ENCODE measurements at regions of chr9 and their contacts with region 1.

Region 1: GRCh38 chr9:23005156-23005555 is 558.5 kb downstream of the DMRTA1 start:
- DNase-seq: no peak
- ATAC-seq: no peak
- H3K4me3 ChIP-seq: no peak overlapping the region
- H3K27ac ChIP-seq: no peak overlapping the region
- H3K4me1 ChIP-seq: no peaks in the 10 kb centered on the region
- H3K27me3 ChIP-seq: no peaks in the 10 kb centered on the region
- CTCF ChIP-seq: no peak

Region 2: DNA sequence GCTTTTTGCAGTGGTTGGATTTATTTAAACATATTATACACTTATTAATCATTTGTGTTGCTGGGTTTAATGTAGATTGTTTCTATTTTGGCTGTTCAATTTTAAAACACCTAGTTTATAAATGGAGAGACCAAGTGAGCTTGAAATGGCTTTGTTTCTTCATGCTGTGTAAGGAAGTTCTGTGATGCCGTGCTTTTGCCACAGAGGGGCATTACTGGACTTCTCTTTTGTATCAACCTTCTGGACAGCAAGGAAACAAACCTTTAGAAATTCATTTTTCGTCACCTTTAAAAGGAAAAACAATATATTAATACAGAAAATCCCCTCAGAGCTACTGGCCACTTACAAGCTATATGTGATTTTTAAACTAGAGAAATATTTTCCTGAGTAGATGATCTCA is 476.7 kb before region 1 on chr9:
- intact Hi-C with region 1: no loop called
- DNase-seq: no peak
- ATAC-seq: no peak
- H3K4me3 ChIP-seq: no peak overlapping the region
- H3K27ac ChIP-seq: no peak overlapping the region
- H3K4me1 ChIP-seq: no peaks in the 10 kb centered on the region
- H3K27me3 ChIP-seq: no peaks in the 10 kb centered on the region
- CTCF ChIP-seq: peak in 4 of 9 donors; percentile 19 to 37 (median 26)

Region 3: DNA sequence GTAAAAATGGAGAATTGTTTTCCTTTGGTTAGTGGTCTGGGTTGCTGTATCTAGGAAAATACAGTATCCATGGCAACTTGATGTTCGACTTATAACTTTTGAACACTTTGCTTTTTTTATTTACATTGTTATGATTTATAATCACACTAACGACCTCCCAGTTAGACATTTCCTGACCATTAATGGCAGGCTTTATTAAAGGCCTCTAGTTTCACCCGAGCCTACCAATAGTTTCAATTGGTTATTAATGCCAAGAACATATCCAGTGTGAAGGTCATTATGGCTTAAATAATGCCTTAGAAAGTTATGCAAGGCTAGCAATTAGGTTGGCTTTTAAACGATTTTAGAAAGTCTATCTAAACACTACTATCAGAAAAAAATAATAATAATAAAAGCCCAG is 106.6 kb before region 1 on chr9:
- intact Hi-C with region 1: no loop called
- DNase-seq: no peak
- ATAC-seq: no peak
- H3K4me3 ChIP-seq: no peak overlapping the region
- H3K27ac ChIP-seq: no peak overlapping the region
- H3K4me1 ChIP-seq: no peaks in the 10 kb centered on the region
- H3K27me3 ChIP-seq: no peaks in the 10 kb centered on the region
- CTCF ChIP-seq: no peak

Region 4: GRCh38 chr9:22954550-22954949 is 50.6 kb before region 1 on chr9:
- intact Hi-C with region 1: no loop called
- DNase-seq: no peak
- ATAC-seq: no peak
- H3K4me3 ChIP-seq: no peak overlapping the region
- H3K27ac ChIP-seq: no peak overlapping the region
- H3K4me1 ChIP-seq: no peaks in the 10 kb centered on the region
- H3K27me3 ChIP-seq: no peaks in the 10 kb centered on the region
- CTCF ChIP-seq: no peak

Region 5: GRCh38 chr9:23073136-23073535 is 68.0 kb after region 1 on chr9:
- intact Hi-C with region 1: loop called in 1 of 10 experiments (anchors 10 kb)
- DNase-seq: no peak
- ATAC-seq: no peak
- H3K4me3 ChIP-seq: no peak overlapping the region
- H3K27ac ChIP-seq: no peak overlapping the region
- H3K4me1 ChIP-seq: no peaks in the 10 kb centered on the region
- H3K27me3 ChIP-seq: no peaks in the 10 kb centered on the region
- CTCF ChIP-seq: no peak